ENCODE measurements at regions of chr7 and their contacts with region 1.

Region 1: DNA sequence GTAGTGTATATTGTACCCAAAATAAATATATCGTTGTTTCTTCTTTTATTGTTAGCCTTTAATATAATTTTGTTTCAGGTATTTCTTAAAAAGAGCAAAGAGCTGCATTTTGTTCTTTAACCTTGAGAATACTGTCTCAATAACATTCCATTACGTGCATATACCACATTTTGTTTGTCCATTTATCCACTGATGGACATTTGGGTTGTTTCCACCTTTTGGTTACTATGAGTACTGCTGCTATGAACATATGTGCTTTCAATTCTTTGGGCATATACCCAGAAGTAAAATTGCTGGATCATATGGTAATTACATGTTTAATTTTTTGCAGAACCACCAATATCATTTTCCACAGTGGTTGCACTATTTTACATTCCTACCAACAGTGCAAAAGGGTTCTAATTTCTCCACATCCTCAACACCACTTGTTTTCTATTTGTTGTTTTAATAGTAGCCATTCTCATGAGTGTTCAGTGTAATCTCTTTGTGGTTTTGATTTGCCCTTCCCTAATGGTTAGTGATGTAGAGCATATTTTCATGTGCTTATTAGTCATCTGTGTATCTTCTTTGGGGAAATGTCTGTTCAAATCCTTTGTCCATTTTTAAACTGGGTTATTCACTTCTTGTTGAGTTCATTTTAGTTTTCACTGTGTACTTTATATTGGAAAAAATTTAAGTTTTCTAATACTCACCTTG is 102.0 kb downstream of the HIBADH start:
- DNase-seq: no peak
- ATAC-seq: no peak
- H3K4me3 ChIP-seq: no peak overlapping the region
- H3K4me3 Mint-ChIP-seq: no peak overlapping the region
- H3K27ac ChIP-seq: no peak overlapping the region
- H3K27ac Mint-ChIP-seq: no peak overlapping the region
- H3K4me1 ChIP-seq: no peaks in the 10 kb centered on the region
- H3K4me1 Mint-ChIP-seq: no peaks in the 10 kb centered on the region
- H3K27me3 ChIP-seq: no peaks in the 10 kb centered on the region
- H3K27me3 Mint-ChIP-seq: no peaks in the 10 kb centered on the region
- CTCF ChIP-seq: no peak

Region 2: GRCh38 chr7:27031289-27032172 is 529.2 kb before region 1 on chr7:
- CTCF ChIA-PET with region 1: no interaction called
- POLR2A ChIA-PET with region 1: no interaction called
- intact Hi-C with region 1: loop called in 1 of 2 experiments (anchors 5 kb)
- DNase-seq: peak in 3 of 14 experiments; percentile 18 to 51 (median 28)
- ATAC-seq: peak; percentile 55
- H3K4me3 ChIP-seq: peak overlapping the region; percentile 1
- H3K4me3 Mint-ChIP-seq: peak overlapping the region; percentile 21
- H3K27ac ChIP-seq: peak overlapping the region in 1 of 2 donors; percentile 23
- H3K27ac Mint-ChIP-seq: peak overlapping the region; percentile 77
- H3K4me1 ChIP-seq: no peaks in the 10 kb centered on the region
- H3K4me1 Mint-ChIP-seq: peaks cover 28% of the 10 kb centered on the region
- H3K27me3 ChIP-seq: no peaks in the 10 kb centered on the region
- H3K27me3 Mint-ChIP-seq: no peaks in the 10 kb centered on the region
- CTCF ChIP-seq: no peak

Region 3: DNA sequence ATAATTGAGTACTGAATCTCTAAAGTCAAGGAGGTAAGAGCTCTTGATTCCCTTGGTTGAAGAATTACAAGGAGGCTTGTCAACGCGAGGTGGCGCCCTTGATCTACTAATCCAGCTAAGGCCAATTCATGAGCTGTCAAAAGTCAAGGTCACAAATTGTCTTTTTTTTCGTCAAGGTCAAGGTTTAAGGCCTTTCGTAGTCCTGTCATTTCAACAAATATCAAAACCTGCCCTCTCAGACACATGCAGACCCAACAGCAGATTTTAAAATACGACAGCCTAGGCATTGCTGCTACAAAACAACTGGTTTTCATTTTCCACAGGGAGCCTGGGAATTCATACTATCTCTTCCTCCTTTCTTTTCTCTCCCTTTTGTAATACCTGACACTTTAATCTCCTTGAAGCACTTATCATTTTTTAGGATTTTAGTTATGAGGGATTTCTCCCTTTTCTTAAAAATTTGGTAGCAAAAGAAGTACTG is 364.4 kb before region 1 on chr7:
- CTCF ChIA-PET with region 1: no interaction called
- POLR2A ChIA-PET with region 1: no interaction called
- intact Hi-C with region 1: no loop called
- DNase-seq: peak; percentile 75 to 89 (median 83)
- ATAC-seq: peak; percentile 51
- H3K4me3 ChIP-seq: no peak overlapping the region
- H3K4me3 Mint-ChIP-seq: peak overlapping the region; percentile 57
- H3K27ac ChIP-seq: no peak overlapping the region
- H3K27ac Mint-ChIP-seq: no peak overlapping the region
- H3K4me1 ChIP-seq: peaks cover 53% of the 10 kb centered on the region
- H3K4me1 Mint-ChIP-seq: peaks cover 43% of the 10 kb centered on the region
- H3K27me3 ChIP-seq: peaks cover 80 to 88% of the 10 kb centered on the region in 2 experiments
- H3K27me3 Mint-ChIP-seq: peaks cover 88% of the 10 kb centered on the region
- CTCF ChIP-seq: peak; percentile 84

Region 4: DNA sequence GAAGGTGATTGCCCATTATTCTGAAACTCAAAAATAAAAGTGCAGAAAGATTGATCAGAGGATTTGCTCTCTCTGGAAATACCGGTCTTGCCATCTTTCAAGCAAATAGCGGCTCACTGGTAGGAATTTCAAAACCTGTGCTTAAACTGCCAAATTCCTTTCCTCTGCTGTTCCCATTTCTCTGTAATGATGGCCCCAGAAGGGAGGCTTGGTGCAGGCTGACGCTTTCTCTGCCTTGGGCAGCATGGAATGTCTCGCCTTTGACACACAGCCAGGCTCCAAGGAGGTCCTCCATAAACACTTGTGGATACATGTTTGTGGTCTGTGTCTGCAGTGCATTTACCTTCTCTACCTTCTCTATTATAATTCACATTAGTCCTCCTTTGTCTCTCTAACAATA is 44.8 kb before region 1 on chr7:
- CTCF ChIA-PET with region 1: no interaction called
- POLR2A ChIA-PET with region 1: no interaction called
- intact Hi-C with region 1: no loop called
- DNase-seq: no peak
- ATAC-seq: no peak
- H3K4me3 ChIP-seq: no peak overlapping the region
- H3K4me3 Mint-ChIP-seq: no peak overlapping the region
- H3K27ac ChIP-seq: no peak overlapping the region
- H3K27ac Mint-ChIP-seq: no peak overlapping the region
- H3K4me1 ChIP-seq: no peaks in the 10 kb centered on the region
- H3K4me1 Mint-ChIP-seq: peaks cover 11% of the 10 kb centered on the region
- H3K27me3 ChIP-seq: no peaks in the 10 kb centered on the region
- H3K27me3 Mint-ChIP-seq: no peaks in the 10 kb centered on the region
- CTCF ChIP-seq: no peak

Region 5: GRCh38 chr7:27616914-27617548 is 56.3 kb after region 1 on chr7:
- CTCF ChIA-PET with region 1: no interaction called
- POLR2A ChIA-PET with region 1: no interaction called
- intact Hi-C with region 1: no loop called
- DNase-seq: no peak
- ATAC-seq: no peak
- H3K4me3 ChIP-seq: no peak overlapping the region
- H3K4me3 Mint-ChIP-seq: no peak overlapping the region
- H3K27ac ChIP-seq: no peak overlapping the region
- H3K27ac Mint-ChIP-seq: no peak overlapping the region
- H3K4me1 ChIP-seq: no peaks in the 10 kb centered on the region
- H3K4me1 Mint-ChIP-seq: no peaks in the 10 kb centered on the region
- H3K27me3 ChIP-seq: no peaks in the 10 kb centered on the region
- H3K27me3 Mint-ChIP-seq: no peaks in the 10 kb centered on the region
- CTCF ChIP-seq: no peak